ENCODE measurements at regions of chr6 and their contacts with region 1.

Region 1: GRCh38 chr6:44074439-44075136 is 52.7 kb downstream of the MRPL14 start:
- DNase-seq: peak; percentile 64 to 86 (median 78)
- ATAC-seq: peak; percentile 54 to 75 (median 65)
- H3K4me3 ChIP-seq: peak overlapping the region in 8 of 12 donors; percentile 20 to 61 (median 54)
- H3K27ac ChIP-seq: peak overlapping the region in 11 of 12 donors; percentile 61 to 91 (median 85)
- H3K4me1 ChIP-seq: peaks cover 12 to 58% (median 38%) of the 10 kb centered on the region in 12 donors
- H3K27me3 ChIP-seq: peaks cover 0 to 10% (median 0%) of the 10 kb centered on the region in 9 donors
- CTCF ChIP-seq: peak; percentile 82 to 96 (median 90)
- POLR2A ChIP-seq: no peak

Region 2: DNA sequence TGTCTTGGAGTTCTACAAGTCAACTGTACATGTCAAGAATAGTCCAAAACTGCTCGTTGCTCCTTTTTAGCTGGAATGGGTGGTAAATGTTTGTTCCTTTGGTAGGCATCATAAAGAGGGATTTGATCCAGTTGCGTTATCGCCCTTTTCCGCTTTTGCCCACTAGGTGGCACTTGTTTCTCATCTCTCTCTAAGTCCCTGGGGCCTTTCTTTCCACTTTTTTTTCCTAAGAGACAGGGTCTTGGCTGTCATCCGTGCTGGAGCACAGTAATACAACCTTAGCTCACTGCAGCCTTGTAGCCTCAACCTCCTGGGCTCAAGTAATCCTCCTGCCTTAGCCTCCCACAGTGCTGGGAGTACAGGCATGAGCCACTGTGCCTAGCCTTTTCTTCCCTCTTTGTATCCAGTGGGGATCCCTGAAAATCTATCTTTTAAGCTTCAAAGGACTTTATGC is 466.3 kb before region 1 on chr6:
- intact Hi-C with region 1: loop called in 6 of 10 experiments (anchors 1 to 10 kb)
- DNase-seq: peak in 3 of 5 donors; percentile 40 to 66 (median 63)
- ATAC-seq: peak; percentile 51 to 56 (median 54)
- H3K4me3 ChIP-seq: no peak overlapping the region
- H3K27ac ChIP-seq: no peak overlapping the region
- H3K4me1 ChIP-seq: peaks cover 0 to 13% (median 0%) of the 10 kb centered on the region in 12 donors
- H3K27me3 ChIP-seq: no peaks in the 10 kb centered on the region
- CTCF ChIP-seq: peak; percentile 66 to 90 (median 78)
- POLR2A ChIP-seq: no peak

Region 3: GRCh38 chr6:43723737-43724295 is 350.8 kb before region 1 on chr6:
- intact Hi-C with region 1: loop called (anchors 1 to 10 kb)
- DNase-seq: peak; percentile 60 to 72 (median 66)
- ATAC-seq: peak; percentile 66 to 88 (median 81)
- H3K4me3 ChIP-seq: no peak overlapping the region
- H3K27ac ChIP-seq: no peak overlapping the region
- H3K4me1 ChIP-seq: peaks cover 3 to 21% (median 6%) of the 10 kb centered on the region in 12 donors
- H3K27me3 ChIP-seq: no peaks in the 10 kb centered on the region
- CTCF ChIP-seq: peak; percentile 46 to 72 (median 58)
- POLR2A ChIP-seq: no peak

Region 4: DNA sequence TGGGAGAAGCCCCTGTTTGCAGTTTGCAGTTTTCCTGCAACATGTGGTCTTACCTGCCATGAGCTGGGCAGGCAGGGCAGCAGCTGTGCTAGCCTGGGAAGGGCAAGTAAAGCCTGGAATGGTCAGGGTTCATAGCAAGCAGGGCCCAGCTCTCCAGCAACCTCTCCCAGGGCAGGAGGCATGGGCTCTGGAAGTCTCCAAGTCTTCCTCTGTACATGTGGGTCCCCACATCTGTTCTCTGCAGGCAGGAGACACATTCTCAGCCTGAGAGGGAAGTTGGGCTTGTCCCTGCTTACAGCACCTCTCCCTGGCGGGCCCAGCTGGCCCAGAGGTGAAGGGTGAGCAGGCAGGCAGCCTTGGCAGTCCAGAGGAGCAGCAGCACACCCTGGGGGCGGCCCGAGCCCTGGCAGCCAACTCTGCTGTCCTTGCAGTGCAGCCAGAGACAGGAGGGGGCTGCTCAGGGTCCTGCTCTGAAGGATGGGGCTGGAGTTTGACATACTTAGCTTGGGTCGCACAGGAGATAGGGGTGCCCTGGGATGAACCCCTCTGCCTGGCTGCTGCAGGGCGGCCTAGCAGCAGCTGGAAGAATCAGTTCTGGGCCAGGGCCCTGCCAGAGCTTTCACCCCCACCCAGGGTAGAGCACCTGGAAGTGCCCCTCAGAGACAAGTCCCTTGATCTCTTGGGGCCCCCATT is 123.4 kb before region 1 on chr6:
- intact Hi-C with region 1: loop called in 7 of 10 experiments (anchors 1 to 5 kb)
- DNase-seq: peak in 4 of 5 donors; percentile 58 to 83 (median 67)
- ATAC-seq: peak; percentile 49 to 67 (median 55)
- H3K4me3 ChIP-seq: no peak overlapping the region
- H3K27ac ChIP-seq: peak overlapping the region in 6 of 12 donors; percentile 24 to 98 (median 72)
- H3K4me1 ChIP-seq: peaks cover 0 to 33% (median 4%) of the 10 kb centered on the region in 12 donors
- H3K27me3 ChIP-seq: peaks cover 0 to 7% (median 0%) of the 10 kb centered on the region in 9 donors
- CTCF ChIP-seq: peak; percentile 29 to 66 (median 50)
- POLR2A ChIP-seq: no peak

Region 5: DNA sequence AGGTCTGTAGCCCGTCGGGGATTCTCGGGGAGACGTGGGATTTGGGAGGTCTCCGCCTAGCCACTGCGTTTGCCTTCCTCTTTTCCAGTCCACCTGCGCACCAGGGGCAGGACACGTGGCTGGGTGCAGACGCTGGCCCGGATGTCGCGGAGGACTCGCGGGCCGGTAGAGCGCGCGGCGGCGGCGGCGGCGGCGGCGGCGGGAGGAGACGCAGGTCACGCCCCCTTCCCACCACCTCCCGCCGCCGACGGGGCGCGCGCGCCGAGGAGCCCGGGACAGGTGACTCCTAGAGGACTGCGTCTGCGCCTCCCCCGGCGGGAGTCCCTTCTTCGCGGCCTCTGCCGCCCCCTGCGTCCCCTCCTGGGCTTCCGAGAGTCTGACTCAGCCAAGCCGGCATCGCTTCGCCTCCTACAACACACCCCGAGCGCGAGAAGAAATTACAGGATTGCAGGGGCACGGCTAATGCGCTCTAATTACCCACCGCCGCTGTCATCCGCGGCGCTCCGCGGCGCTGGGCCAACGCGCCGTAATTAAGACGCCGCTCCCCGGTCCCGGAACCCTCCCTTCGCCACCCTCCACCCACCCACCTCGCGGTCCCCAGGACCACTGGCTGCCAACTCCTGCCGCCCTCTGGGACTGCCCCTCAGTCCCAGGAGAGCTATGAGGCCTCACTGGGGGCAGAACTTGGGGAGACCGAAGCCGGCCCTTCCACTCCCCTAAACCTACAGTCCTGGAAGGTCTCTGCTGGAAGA is 71.8 kb before region 1 on chr6:
- intact Hi-C with region 1: loop called in 5 of 10 experiments (anchors 2 to 5 kb)
- DNase-seq: peak; percentile 46 to 76 (median 59)
- ATAC-seq: peak in 3 of 4 donors; percentile 9 to 54 (median 50)
- H3K4me3 ChIP-seq: peak overlapping the region; percentile 3 to 49 (median 38)
- H3K27ac ChIP-seq: peak overlapping the region in 10 of 12 donors; percentile 47 to 97 (median 86)
- H3K4me1 ChIP-seq: peaks cover 0 to 52% (median 17%) of the 10 kb centered on the region in 12 donors
- H3K27me3 ChIP-seq: peaks cover 0 to 37% (median 17%) of the 10 kb centered on the region in 9 donors
- CTCF ChIP-seq: peak in 1 of 12 donors; percentile 31
- POLR2A ChIP-seq: no peak

Region 6: DNA sequence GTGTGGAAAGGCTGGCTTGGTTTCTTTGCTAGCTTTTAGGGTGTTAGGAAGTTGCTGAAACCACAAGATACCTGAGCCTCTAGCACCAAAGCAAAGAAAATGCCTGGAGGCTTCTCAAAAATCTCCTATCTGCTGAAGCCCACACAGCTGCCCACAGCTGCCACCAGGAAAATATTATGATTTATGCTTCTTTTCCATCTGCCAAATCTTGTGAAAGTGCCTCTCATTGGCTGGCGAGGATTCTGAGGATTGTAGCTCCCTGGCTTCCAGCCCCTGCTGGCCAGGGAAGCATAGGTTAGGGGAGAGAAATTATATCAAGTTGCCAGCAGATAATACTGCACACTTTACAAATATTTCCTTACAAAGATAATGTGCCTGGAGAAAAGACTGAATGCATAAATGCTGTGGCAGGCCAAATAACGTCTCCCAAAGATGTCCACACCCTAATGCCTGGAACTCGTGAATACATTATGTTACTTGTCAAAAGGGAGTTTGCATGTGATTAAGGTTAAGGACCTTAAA is 45.7 kb before region 1 on chr6:
- intact Hi-C with region 1: no loop called
- DNase-seq: peak in 1 of 5 donors; percentile 51
- ATAC-seq: peak in 1 of 4 donors; percentile 33
- H3K4me3 ChIP-seq: no peak overlapping the region
- H3K27ac ChIP-seq: no peak overlapping the region
- H3K4me1 ChIP-seq: peaks cover 0 to 5% (median 0%) of the 10 kb centered on the region in 12 donors
- H3K27me3 ChIP-seq: no peaks in the 10 kb centered on the region
- CTCF ChIP-seq: no peak
- POLR2A ChIP-seq: no peak

Measured in heart left ventricle (tissue), 16 donors.